Cardiac septum (tissue), 1 donor: ENCODE measurements at regions of chr20 and their contacts with region 1.

Region 1: DNA sequence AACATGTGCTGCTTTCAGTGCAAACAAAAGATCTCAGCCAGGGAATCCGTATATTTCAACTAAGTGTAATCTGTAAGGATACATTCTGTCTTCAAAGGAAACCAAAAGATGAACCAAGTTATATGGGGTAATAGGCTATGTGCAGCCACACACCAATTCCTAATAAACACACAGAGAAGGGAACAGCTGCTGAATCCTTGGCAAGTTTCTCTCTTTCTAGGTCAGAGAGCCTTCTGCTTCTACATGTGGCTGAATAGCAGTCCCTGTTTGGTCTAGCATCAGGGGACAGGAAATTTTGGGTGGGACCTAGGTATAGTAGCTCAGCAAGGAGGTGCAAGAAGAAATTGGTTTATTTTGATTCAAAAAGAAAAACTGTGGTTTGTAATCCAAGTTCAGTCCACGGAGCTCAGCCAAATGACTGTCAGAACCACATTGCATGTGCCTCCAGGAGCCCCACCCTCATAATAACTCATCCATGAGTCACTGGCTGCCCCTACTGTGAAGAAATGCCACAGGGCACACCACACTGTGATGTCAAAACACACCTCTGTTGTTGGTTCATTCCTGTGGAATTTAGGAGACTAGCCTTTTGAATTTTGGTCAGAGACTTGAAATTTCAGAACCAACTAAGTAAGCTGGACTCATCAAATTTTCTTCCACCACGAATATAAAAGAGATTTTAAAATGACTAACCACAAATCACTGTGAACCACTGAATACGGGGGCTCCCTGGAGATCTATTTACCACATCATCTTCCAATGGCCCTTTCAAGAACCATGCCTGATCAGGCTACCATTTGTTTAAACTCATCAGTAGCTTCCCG is 21.1 kb downstream of the SPTLC3 start:
- DNase-seq: no peak

Region 2: DNA sequence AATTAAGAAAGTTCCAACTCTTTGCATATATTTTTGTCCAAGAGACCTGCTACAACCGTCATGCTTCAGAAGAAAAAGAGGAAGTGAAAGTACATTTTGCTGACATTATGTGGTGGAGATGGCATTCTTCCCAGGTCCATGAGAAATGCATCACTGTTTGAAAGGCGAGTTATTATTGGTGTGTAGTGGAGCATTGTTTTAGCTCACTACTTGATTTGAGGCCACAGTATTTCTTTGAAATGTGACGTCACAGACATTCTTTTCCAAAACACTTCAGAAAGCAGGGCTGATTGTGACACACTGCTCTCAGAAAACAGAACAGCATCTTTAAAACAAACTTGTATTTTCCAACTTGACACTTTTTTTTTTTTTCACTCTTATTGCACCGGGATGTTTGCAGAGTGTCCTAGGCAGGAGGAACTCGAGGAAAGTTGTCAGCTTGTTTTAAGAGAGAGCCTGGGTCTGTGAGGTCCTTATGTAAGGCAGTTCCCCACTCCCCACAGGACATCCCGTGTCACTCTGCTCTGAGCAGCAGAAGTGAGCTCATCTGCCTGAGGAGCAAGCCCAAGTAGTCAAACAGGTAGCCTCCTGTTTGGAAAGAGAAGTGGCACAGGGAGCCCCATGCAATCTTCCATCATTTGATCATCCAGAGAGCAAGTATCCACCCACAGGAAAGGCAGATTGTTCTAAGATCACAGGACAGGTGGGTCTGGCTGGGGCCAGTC is 20.1 kb before region 1 on chr20:
- intact Hi-C with region 1: loop called (anchors 2 kb)
- DNase-seq: no peak